MCF 10A (cell line): ENCODE measurements at regions of chr2 and their contacts with region 1.

Region 1: GRCh38 chr2:229445019-229445418 is 173.9 kb upstream of the PID1 start:
- DNase-seq: peak; percentile 96
- H3K4me3 Mint-ChIP-seq: peak overlapping the region; percentile 59
- H3K27ac Mint-ChIP-seq: peak overlapping the region; percentile 100
- H3K4me1 Mint-ChIP-seq: peaks cover 45% of the 10 kb centered on the region
- H3K27me3 Mint-ChIP-seq: no peaks in the 10 kb centered on the region
- CTCF ChIP-seq: no peak

Region 2: DNA sequence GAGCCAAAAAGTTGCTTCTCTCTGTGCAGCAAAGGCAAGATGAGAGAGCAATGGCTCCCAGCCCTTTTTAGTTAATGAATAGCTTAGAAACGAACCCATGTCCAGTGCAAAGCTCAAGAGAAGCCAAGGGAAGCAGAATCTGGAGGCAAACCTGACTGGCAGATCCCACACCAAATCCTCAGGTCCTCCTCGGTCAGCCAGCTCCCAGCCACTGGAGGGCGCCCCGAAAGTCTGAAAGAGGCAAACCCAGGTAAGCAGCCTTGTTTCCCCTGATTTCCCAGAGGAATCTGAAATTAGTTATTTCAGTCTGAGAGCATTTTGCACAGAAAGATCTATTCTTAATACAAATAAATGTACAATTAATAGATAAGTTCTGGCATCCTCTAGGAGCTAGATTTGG is 102.6 kb before region 1 on chr2:
- CTCF ChIA-PET with region 1: interaction called, 4 read pairs
- POLR2A ChIA-PET with region 1: interaction called, 19 read pairs
- intact Hi-C with region 1: no loop called
- DNase-seq: peak; percentile 74
- H3K4me3 Mint-ChIP-seq: no peak overlapping the region
- H3K27ac Mint-ChIP-seq: no peak overlapping the region
- H3K4me1 Mint-ChIP-seq: peaks cover 33% of the 10 kb centered on the region
- H3K27me3 Mint-ChIP-seq: no peaks in the 10 kb centered on the region
- CTCF ChIP-seq: no peak

Region 3: GRCh38 chr2:229408356-229408755 is 36.7 kb before region 1 on chr2:
- CTCF ChIA-PET with region 1: no interaction called
- POLR2A ChIA-PET with region 1: interaction called, 17 read pairs
- intact Hi-C with region 1: no loop called
- DNase-seq: peak; percentile 97
- H3K4me3 Mint-ChIP-seq: peak overlapping the region; percentile 48
- H3K27ac Mint-ChIP-seq: peak overlapping the region; percentile 99
- H3K4me1 Mint-ChIP-seq: peaks cover 57% of the 10 kb centered on the region
- H3K27me3 Mint-ChIP-seq: no peaks in the 10 kb centered on the region
- CTCF ChIP-seq: no peak

Region 4: GRCh38 chr2:229431327-229431954 is 13.6 kb before region 1 on chr2:
- CTCF ChIA-PET with region 1: interaction called, 11 read pairs
- POLR2A ChIA-PET with region 1: interaction called, 73 read pairs
- intact Hi-C with region 1: no loop called
- DNase-seq: peak; percentile 69
- H3K4me3 Mint-ChIP-seq: no peak overlapping the region
- H3K27ac Mint-ChIP-seq: peak overlapping the region; percentile 75
- H3K4me1 Mint-ChIP-seq: peaks cover 32% of the 10 kb centered on the region
- H3K27me3 Mint-ChIP-seq: no peaks in the 10 kb centered on the region
- CTCF ChIP-seq: peak; percentile 48

Region 5: DNA sequence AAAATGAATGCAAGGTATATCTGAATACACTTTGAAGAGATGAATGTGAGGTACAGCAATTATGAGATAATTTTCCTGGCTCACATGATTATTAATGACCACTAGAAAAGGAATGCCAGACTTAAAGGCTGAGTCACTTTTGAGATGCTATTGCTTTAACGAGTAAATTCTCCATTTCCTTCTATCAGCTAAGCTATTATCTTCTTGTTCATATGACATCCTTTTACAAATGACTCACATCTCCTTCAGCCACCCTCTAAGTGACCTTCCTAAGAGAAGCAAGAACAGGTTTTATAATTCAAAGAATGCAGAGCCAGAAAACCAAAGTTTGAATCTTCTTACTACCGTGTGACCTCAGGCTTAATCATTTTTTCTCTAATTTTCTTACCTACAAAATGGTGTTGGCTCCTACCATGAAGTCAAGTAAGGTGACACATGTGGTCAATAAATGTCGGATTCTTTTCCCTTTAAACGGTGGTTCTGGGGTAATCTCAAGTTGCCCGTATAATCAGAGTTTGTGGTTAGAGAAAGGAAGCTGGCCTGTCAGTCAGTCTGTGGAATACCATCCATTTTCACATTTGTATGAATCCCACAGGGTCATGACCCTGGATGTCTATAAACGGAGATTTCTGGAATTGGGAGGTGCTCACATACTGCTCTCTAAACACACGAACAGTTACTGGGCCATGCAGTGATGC is 10.1 kb after region 1 on chr2:
- CTCF ChIA-PET with region 1: interaction called, 4 read pairs
- POLR2A ChIA-PET with region 1: interaction called, 11 read pairs
- intact Hi-C with region 1: no loop called
- DNase-seq: peak; percentile 52
- H3K4me3 Mint-ChIP-seq: peak overlapping the region; percentile 33
- H3K27ac Mint-ChIP-seq: peak overlapping the region; percentile 86
- H3K4me1 Mint-ChIP-seq: peaks cover 26% of the 10 kb centered on the region
- H3K27me3 Mint-ChIP-seq: no peaks in the 10 kb centered on the region
- CTCF ChIP-seq: no peak

Region 6: DNA sequence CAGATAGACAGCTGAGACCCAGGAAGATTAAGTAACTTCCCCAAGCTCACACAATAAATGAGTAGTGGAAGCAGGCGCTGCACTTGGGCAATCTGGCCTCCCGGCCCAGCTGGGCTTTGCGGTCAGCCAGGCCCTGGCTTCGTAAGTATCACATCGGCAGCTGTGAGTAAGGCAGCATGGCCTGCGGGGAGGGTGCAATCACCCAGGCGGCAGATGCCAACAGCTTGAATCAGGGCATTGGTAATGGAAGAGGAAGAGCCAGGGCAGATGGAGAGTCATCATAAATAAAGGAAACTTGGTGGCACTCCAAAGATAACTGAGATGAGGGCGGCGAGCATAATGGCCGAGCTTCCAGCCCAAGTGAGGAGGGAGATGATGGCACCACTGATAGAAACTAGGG is 44.0 kb after region 1 on chr2:
- CTCF ChIA-PET with region 1: no interaction called
- POLR2A ChIA-PET with region 1: interaction called, 20 read pairs
- intact Hi-C with region 1: no loop called
- DNase-seq: peak; percentile 99
- H3K4me3 Mint-ChIP-seq: peak overlapping the region; percentile 68
- H3K27ac Mint-ChIP-seq: peak overlapping the region; percentile 46
- H3K4me1 Mint-ChIP-seq: peaks cover 39% of the 10 kb centered on the region
- H3K27me3 Mint-ChIP-seq: no peaks in the 10 kb centered on the region
- CTCF ChIP-seq: no peak

Region 7: GRCh38 chr2:231245253-231246094 is 1800.5 kb after region 1 on chr2:
- CTCF ChIA-PET with region 1: no interaction called
- POLR2A ChIA-PET with region 1: no interaction called
- intact Hi-C with region 1: no loop called
- DNase-seq: peak; percentile 34
- H3K4me3 Mint-ChIP-seq: no peak overlapping the region
- H3K27ac Mint-ChIP-seq: no peak overlapping the region
- H3K4me1 Mint-ChIP-seq: peaks cover 5% of the 10 kb centered on the region
- H3K27me3 Mint-ChIP-seq: no peaks in the 10 kb centered on the region
- CTCF ChIP-seq: no peak